Heart left ventricle (tissue), 16 donors: ENCODE measurements at regions of chr22 and their contacts with region 1.

Region 1: GRCh38 chr22:34534101-34534500 is 531.9 kb upstream of the ISX start:
- DNase-seq: no peak
- ATAC-seq: no peak
- H3K4me3 ChIP-seq: no peak overlapping the region
- H3K27ac ChIP-seq: no peak overlapping the region
- H3K4me1 ChIP-seq: no peaks in the 10 kb centered on the region
- H3K27me3 ChIP-seq: no peaks in the 10 kb centered on the region
- CTCF ChIP-seq: no peak
- POLR2A ChIP-seq: no peak

Region 2: DNA sequence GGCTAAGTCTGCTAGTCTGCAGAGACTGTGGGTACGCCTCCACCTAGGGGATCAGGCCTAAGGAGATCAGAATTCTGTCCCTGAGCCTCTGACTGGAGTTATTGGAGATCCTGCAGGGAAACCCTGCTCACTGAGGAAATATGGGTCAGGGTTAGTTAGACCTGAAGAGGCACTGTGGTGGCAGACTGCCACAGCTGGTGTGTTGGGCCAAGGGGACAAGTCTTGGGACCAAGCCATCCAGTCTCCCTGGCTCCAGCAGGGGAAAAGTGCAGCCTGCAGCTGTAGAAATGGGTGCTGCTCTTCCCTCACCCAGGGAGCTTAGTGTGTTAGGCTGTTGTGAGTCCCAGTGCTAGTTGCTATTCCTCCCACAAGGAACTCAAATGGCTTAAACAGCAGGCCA is 279.1 kb before region 1 on chr22:
- intact Hi-C with region 1: no loop called
- DNase-seq: peak; percentile 18 to 77 (median 60)
- ATAC-seq: peak; percentile 37 to 77 (median 54)
- H3K4me3 ChIP-seq: no peak overlapping the region
- H3K27ac ChIP-seq: no peak overlapping the region
- H3K4me1 ChIP-seq: peaks cover 0 to 6% (median 0%) of the 10 kb centered on the region in 12 donors
- H3K27me3 ChIP-seq: no peaks in the 10 kb centered on the region
- CTCF ChIP-seq: no peak
- POLR2A ChIP-seq: no peak

Region 3: GRCh38 chr22:34454598-34454997 is 79.5 kb before region 1 on chr22:
- intact Hi-C with region 1: no loop called
- DNase-seq: no peak
- ATAC-seq: no peak
- H3K4me3 ChIP-seq: no peak overlapping the region
- H3K27ac ChIP-seq: no peak overlapping the region
- H3K4me1 ChIP-seq: no peaks in the 10 kb centered on the region
- H3K27me3 ChIP-seq: peaks cover 0 to 15% (median 0%) of the 10 kb centered on the region in 9 donors
- CTCF ChIP-seq: no peak
- POLR2A ChIP-seq: no peak

Region 4: DNA sequence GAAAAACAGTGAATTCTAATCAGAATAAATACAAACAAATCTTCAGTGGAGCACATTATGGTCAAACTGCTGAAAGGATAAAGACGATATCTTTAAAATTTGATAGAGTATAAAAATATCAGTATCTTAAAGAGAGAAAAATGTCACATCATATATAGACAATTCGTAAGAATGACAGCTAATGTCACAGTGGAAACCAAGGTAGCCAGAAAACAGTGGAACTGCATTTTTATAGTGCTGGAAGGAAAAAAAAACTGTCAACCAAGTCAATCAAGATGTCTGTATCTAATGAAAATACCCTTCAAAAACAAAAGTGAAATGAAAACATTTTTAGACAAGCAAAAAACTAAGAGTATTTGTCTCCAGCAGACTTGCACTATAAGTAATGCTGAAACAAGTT is 649.8 kb after region 1 on chr22:
- intact Hi-C with region 1: loop called in 1 of 10 experiments (anchors 10 kb)
- DNase-seq: no peak
- ATAC-seq: no peak
- H3K4me3 ChIP-seq: no peak overlapping the region
- H3K27ac ChIP-seq: no peak overlapping the region
- H3K4me1 ChIP-seq: no peaks in the 10 kb centered on the region
- H3K27me3 ChIP-seq: no peaks in the 10 kb centered on the region
- CTCF ChIP-seq: no peak
- POLR2A ChIP-seq: no peak